Dorsolateral prefrontal cortex (tissue), 120 donors: ENCODE measurements at regions of chr13 and their contacts with region 1.

Region 1: DNA sequence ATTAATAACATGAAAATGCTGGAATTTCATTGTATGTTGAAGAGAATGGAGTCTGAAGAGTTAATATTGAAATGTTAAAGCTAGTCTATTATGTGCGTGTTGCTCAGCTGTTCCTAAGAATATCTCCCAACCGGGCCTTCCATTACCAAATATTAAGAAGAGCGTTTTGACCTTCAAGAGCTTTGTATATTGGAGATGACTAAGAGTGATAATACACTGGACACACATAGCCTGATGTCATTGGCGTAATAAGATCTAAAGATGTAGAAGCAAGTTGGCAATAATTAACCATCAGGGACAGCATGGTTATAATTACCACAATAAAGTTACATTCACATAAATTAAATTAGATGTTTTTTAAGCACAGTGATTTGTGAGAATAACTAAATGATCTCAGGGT is 523.9 kb downstream of the SLITRK1 start:
- DNase-seq: no peak
- H3K4me3 ChIP-seq: no peak overlapping the region
- H3K27ac ChIP-seq: no peak overlapping the region
- H3K27me3 ChIP-seq: no peaks in the 10 kb centered on the region
- CTCF ChIP-seq: no peak

Region 2: DNA sequence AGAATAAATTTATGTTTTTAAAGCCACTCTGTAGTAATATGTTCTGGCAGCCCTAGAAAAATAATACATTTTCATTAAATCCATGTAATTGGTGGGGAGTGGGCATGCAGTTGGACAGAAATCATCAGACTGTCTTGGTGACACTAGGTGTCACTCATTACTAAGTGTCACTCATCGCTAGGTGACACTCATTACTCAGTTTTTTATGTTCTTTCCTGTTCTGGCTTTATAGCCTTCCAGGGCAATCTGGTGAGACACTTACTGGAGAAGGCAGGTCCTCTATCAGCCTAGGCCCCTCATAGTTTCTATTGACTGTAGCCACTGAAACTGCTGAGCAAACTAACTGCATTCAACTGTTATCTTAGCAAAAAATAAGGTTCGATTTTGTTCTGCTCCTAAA is 18.3 kb before region 1 on chr13:
- intact Hi-C with region 1: loop called in 1 of 2 experiments (anchors 1 kb)
- DNase-seq: no peak
- H3K4me3 ChIP-seq: no peak overlapping the region
- H3K27ac ChIP-seq: no peak overlapping the region
- H3K27me3 ChIP-seq: no peaks in the 10 kb centered on the region
- CTCF ChIP-seq: peak in 11 of 56 donors; percentile 5 to 47 (median 15)

Region 3: DNA sequence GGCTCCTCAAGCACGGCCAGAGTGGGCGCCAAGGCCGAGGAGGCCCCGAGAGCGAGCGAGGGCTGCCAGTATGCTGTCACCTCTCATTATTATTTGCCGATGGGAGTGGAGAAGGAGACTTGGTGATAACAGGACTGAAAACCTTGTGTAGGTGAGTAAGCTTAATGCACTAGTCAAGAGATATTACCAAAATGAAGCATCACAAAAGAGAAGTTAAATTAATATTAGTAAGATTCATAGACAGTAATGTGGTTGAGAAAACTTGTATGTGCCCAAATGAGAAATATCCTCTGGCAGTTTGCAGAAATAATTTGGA is 728.4 kb after region 1 on chr13:
- intact Hi-C with region 1: no loop called
- DNase-seq: no peak
- H3K4me3 ChIP-seq: peak overlapping the region in 4 of 59 donors; percentile 16 to 41 (median 29)
- H3K27ac ChIP-seq: no peak overlapping the region
- H3K27me3 ChIP-seq: no peaks in the 10 kb centered on the region
- CTCF ChIP-seq: no peak